ENCODE measurements at regions of chr7 and their contacts with region 1.

Region 1: GRCh38 chr7:149742075-149742701 is 31.2 kb downstream of the ZNF467 start:
- DNase-seq: peak; percentile 20
- H3K4me3 ChIP-seq: peak overlapping the region; percentile 51
- H3K27ac ChIP-seq: no peak overlapping the region
- H3K27me3 ChIP-seq: peaks cover 15% of the 10 kb centered on the region
- CTCF ChIP-seq: peak; percentile 96

Region 2: GRCh38 chr7:149662591-149663095 is 79.5 kb before region 1 on chr7:
- CTCF ChIA-PET with region 1: interaction called, 51 read pairs
- POLR2A ChIA-PET with region 1: no interaction called
- DNase-seq: no peak
- H3K4me3 ChIP-seq: no peak overlapping the region
- H3K27ac ChIP-seq: no peak overlapping the region
- H3K27me3 ChIP-seq: peaks cover 2% of the 10 kb centered on the region
- CTCF ChIP-seq: peak; percentile 56

Region 3: DNA sequence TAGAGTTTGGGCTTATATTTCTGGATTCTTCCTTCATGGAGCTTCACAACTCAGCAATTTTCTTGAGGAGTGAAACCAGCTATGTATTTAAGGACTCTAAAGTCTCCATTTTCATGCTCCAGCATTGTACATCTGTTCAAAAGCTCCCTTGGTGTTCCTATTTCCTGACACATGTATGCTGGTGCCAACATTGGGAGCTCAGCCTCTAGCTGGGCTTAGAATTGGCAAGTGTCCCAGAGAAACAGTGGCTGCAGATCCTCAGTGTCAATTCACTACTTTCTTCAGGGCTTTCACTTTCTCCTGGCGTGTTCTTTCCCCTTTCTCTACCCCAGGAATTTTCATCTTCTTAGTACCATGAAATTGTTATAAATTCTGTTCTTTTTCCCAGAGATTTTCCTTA is 71.9 kb before region 1 on chr7:
- CTCF ChIA-PET with region 1: interaction called, 12 read pairs
- POLR2A ChIA-PET with region 1: no interaction called
- DNase-seq: no peak
- H3K4me3 ChIP-seq: no peak overlapping the region
- H3K27ac ChIP-seq: no peak overlapping the region
- H3K27me3 ChIP-seq: peaks cover 5% of the 10 kb centered on the region
- CTCF ChIP-seq: no peak

Region 4: DNA sequence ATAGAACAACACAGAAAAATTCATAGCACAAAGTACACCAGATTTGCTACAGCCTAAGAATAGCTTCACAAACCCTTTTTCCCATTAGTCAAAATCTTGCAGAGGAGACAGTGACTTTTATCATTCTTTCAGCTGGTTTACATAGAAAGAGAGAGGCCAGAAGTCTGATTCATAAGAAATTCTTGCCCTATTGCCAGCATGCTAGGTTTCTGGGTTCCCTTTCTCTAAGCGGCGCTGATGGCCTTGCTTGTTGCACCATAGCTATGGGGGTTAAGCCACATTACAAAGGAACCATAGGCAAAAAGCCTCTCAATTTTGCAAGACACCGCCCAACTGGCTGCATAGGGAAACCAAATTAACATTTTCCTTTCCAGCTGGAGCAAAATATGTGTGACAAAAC is 56.2 kb before region 1 on chr7:
- CTCF ChIA-PET with region 1: interaction called, 10 read pairs
- POLR2A ChIA-PET with region 1: no interaction called
- DNase-seq: no peak
- H3K4me3 ChIP-seq: no peak overlapping the region
- H3K27ac ChIP-seq: no peak overlapping the region
- H3K27me3 ChIP-seq: peaks cover 9% of the 10 kb centered on the region
- CTCF ChIP-seq: no peak

Region 5: GRCh38 chr7:149753401-149754233 is 11.4 kb after region 1 on chr7:
- CTCF ChIA-PET with region 1: interaction called, 25 read pairs
- POLR2A ChIA-PET with region 1: no interaction called
- DNase-seq: no peak
- H3K4me3 ChIP-seq: no peak overlapping the region
- H3K27ac ChIP-seq: no peak overlapping the region
- H3K27me3 ChIP-seq: peaks cover 14% of the 10 kb centered on the region
- CTCF ChIP-seq: peak; percentile 50

Region 6: GRCh38 chr7:149840722-149841121 is 98.5 kb after region 1 on chr7:
- CTCF ChIA-PET with region 1: interaction called, 14 read pairs
- POLR2A ChIA-PET with region 1: no interaction called
- DNase-seq: no peak
- H3K4me3 ChIP-seq: no peak overlapping the region
- H3K27ac ChIP-seq: no peak overlapping the region
- H3K27me3 ChIP-seq: no peaks in the 10 kb centered on the region
- CTCF ChIP-seq: no peak